PC-3 (cell line): ENCODE measurements at regions of chr2 and their contacts with region 1.

Region 1: GRCh38 chr2:241224018-241224850 is 35.8 kb downstream of the ANO7 start:
- DNase-seq: peak; percentile 33
- ATAC-seq: peak; percentile 60
- H3K4me3 ChIP-seq: no peak overlapping the region
- H3K27ac ChIP-seq: 0 out of 2 replicates have a peak overlapping the region, but pooled peaks have one; percentile 12
- H3K4me1 ChIP-seq: peaks cover 14% of the 10 kb centered on the region
- H3K27me3 ChIP-seq: no peaks in the 10 kb centered on the region
- CTCF ChIP-seq: no peak

Region 2: GRCh38 chr2:240851078-240851991 is 372.9 kb before region 1 on chr2:
- CTCF ChIA-PET with region 1: no interaction called
- POLR2A ChIA-PET with region 1: no interaction called
- intact Hi-C with region 1: loop called (anchors 5 kb)
- DNase-seq: peak; percentile 83
- ATAC-seq: peak; percentile 99
- H3K4me3 ChIP-seq: no peak overlapping the region
- H3K27ac ChIP-seq: no peak overlapping the region
- H3K4me1 ChIP-seq: no peaks in the 10 kb centered on the region
- H3K27me3 ChIP-seq: no peaks in the 10 kb centered on the region
- CTCF ChIP-seq: peak; percentile 89

Region 3: DNA sequence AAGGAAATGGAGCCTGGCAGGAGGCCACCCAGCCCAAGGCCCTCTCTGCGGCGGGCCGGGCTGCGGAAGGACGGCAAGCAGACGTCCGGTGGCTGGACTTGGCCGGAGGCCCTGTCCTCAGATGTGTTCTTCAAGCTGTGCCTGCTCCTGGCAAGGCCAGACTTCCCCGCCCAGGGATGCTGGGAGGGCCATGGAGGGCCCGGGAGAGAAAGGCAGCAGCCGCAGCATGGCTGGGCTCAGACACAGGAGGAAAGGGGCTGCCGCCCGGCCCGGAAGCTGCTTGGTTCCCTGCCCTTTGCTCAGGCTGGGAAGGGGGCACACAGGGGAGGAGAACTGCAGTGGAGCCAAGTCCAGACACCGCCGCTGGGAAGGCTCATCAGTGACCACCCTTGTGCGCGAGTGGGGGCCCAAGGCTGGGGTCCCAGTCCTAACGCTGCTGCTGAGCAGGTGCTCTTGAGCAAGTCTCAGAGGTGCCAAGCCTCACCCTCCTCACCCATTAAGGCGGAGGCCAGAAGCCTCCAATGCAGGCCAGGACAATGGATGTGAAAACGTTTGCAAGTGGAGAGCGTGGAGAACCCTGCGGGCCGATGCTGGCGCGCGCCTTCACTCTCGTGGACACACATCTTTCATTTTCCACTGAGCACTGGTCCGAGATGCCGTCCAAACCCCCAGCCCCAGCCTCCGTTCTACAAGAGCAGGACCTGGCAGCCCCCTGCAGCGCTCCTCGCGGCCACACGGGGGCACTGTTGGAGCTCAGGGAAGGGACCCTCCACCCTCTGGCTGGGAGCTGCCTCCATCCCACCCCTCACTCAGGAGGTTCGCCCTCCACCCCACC is 310.2 kb before region 1 on chr2:
- CTCF ChIA-PET with region 1: no interaction called
- POLR2A ChIA-PET with region 1: no interaction called
- intact Hi-C with region 1: loop called (anchors 10 kb)
- DNase-seq: peak; percentile 54
- ATAC-seq: peak; percentile 65
- H3K4me3 ChIP-seq: no peak overlapping the region
- H3K27ac ChIP-seq: no peak overlapping the region
- H3K4me1 ChIP-seq: peaks cover 12% of the 10 kb centered on the region
- H3K27me3 ChIP-seq: no peaks in the 10 kb centered on the region
- CTCF ChIP-seq: peak; percentile 91